B cell (primary cell): ENCODE measurements at regions of chr12 and their contacts with region 1.

Region 1: DNA sequence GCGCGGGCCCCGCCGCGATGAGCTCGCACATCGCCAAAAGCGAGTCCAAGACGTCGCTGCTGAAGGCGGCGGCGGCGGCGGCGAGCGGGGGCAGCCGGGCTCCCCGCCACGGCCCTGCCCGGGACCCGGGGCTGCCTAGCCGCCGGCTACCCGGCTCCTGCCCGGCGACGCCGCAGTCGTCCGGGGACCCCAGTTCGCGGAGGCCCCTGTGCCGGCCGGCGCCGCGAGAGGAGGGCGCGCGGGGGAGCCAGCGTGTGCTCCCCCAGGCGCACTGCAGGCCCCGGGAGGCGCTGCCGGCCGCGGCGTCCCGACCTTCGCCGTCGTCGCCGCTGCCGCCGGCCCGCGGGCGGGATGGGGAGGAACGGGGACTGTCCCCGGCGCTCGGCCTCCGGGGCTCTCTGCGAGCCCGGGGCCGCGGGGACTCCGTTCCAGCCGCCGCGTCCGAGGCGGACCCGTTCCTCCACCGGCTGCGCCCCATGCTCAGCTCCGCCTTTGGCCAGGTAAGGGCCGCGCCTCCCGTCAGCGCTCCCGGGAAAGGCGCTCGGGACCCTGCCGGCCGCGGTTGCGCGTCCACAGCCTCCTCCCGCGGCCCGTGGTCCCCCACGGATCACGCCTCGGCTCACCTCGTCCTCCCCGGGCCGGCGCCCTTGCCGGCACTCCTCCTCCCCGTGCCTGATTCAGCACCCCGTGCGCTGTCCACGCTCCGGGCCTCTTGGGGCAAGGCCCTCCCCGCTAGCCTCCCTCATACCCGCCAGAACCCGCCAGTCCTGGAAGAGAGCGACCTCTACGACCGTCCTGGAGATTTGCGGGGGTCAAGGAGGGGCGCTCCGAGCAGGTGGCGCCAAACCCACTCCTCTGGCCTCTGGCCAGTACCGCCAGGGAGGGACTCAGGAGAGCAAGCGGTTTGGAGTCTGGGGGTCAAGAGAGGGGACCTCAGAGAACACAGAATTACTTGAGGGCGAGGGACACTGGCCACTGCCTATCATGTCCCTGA is 711 bp downstream of the CABP1 start:
- DNase-seq: peak; percentile 70
- ATAC-seq: peak; percentile 56
- H3K4me3 ChIP-seq: peak overlapping the region in 3 of 5 experiments; percentile 41 to 44 (median 42)
- H3K4me3 Mint-ChIP-seq: peak overlapping the region; percentile 81
- H3K27ac ChIP-seq: no peak overlapping the region
- H3K27ac Mint-ChIP-seq: no peak overlapping the region
- H3K4me1 ChIP-seq: peaks cover 13 to 20% of the 10 kb centered on the region in 2 donors
- H3K4me1 Mint-ChIP-seq: peaks cover 13% of the 10 kb centered on the region
- H3K27me3 ChIP-seq: peaks cover 0 to 61% (median 37%) of the 10 kb centered on the region in 4 experiments
- H3K27me3 Mint-ChIP-seq: peaks cover 62% of the 10 kb centered on the region
- CTCF ChIP-seq: no peak

Region 2: DNA sequence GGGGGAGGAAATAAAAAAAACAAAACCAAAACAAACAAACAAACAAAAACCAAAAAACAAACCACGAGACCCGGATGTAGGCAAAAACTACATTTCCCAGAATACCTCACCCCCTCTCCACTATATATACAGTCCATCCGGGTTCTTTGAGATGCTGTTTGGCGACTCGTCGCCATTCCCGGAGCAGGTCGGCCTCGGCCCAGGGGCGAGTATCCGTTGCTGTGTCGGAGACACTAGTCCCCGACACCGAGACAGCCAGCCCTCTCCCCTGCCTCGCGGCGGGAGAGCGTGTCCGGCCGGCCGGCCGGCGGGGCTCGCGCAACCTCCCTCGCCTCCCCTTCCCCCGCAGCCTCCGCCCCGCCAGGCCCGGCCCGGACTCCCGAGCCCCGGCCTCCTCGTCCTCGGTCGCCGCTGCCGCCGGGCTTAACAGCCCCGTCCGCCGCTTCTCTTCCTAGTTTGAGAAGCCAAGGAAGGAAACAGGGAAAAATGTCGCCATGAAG is 106.9 kb before region 1 on chr12 and contains the start of gene RNF10:
- CTCF ChIA-PET with region 1: no interaction called
- POLR2A ChIA-PET with region 1: interaction called, 14 read pairs
- intact Hi-C with region 1: no loop called
- DNase-seq: peak; percentile 93
- ATAC-seq: peak; percentile 77
- H3K4me3 ChIP-seq: peak within 1 kb of the TSS; percentile 69 to 93 (median 80)
- H3K4me3 Mint-ChIP-seq: peak within 1 kb of the TSS; percentile 97
- H3K27ac ChIP-seq: peak within 1 kb of the TSS; percentile 64 to 94
- H3K27ac Mint-ChIP-seq: peak within 1 kb of the TSS; percentile 97
- H3K4me1 ChIP-seq: peaks cover 47 to 55% of the 10 kb centered on the region in 2 donors
- H3K4me1 Mint-ChIP-seq: peaks cover 57% of the 10 kb centered on the region
- H3K27me3 ChIP-seq: no peaks in the 10 kb centered on the region
- H3K27me3 Mint-ChIP-seq: no peaks in the 10 kb centered on the region
- CTCF ChIP-seq: no peak
- total RNA-seq, gene RNF10: 227 and 236 TPM in 2 replicates